GM10248 (cell line): ENCODE measurements at regions of chr4 and their contacts with region 1.

Region 1: GRCh38 chr4:54233277-54233696 is 4.2 kb downstream of the PDGFRA start:
- DNase-seq: peak; percentile 85
- CTCF ChIP-seq: peak; percentile 87

Region 2: GRCh38 chr4:52376132-52376704 is 1857.1 kb before region 1 on chr4:
- CTCF ChIA-PET with region 1: interaction called, 16 read pairs
- POLR2A ChIA-PET with region 1: no interaction called
- DNase-seq: peak; percentile 24
- CTCF ChIP-seq: peak; percentile 37

Region 3: GRCh38 chr4:53702334-53703266 is 530.7 kb before region 1 on chr4:
- CTCF ChIA-PET with region 1: interaction called, 10 read pairs
- POLR2A ChIA-PET with region 1: no interaction called
- DNase-seq: peak; percentile 47
- CTCF ChIP-seq: peak; percentile 15

Region 4: DNA sequence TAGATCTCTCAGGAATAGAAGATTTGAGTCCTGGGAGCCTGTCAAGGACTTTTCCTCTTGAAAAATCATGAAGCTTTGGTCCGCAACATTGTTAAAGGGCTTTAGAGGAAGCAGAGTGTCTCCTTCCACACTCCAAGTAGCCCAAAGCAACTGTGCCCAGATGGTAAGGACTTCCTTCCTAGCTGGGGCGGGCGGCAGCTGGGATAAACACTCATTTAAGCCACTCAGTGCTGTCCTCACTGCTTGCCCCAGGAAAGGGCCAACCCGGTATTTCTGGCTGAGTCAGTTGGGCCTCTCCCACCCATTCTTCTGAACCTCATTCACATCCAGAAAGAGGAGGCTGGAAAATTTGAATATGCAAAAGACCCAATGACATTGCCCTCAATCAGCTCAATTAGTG is 313.2 kb before region 1 on chr4:
- CTCF ChIA-PET with region 1: interaction called, 23 read pairs
- POLR2A ChIA-PET with region 1: no interaction called
- DNase-seq: no peak
- CTCF ChIP-seq: no peak

Region 5: DNA sequence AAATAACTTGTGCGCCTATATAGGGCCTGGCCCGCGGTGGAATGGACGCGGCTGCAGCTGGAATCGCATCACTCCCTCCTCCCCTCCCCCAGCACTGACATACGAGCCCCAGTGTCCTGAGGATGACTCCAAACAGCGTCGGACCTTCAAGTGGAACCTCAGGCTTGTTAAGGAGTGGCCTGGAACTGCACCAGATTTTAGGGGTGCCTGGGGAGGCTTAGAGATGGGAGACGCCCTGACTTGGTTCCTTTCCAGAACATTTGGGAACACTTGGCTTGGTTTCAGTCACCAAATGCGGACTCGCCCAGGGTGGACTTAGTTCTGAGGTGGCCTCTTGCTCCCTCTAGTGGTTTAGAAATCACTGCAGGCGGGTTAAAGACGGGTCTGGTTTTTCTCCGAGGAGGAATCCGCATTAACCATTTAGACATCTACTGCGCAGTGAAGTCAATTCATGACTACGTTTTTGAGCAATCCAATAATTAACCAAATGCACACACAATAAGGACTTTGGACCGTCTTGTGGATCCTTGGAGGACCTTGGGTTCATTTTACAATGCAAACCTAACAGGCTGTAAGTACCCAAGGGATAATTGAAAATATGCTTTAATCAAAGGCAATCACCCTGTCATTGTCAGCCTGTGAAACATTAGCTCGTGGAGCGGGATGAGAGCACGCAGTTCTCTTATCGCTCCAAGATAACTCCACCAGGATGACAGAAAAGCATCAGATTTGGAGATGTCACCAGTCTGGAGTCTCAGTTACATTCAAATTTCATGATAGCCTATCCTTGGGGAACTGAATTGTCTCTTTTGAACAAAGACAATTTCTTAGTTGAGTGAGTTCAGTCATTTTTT is 15.4 kb before region 1 on chr4:
- CTCF ChIA-PET with region 1: interaction called, 31 read pairs
- POLR2A ChIA-PET with region 1: no interaction called
- DNase-seq: peak; percentile 76
- CTCF ChIP-seq: peak; percentile 66

Region 6: GRCh38 chr4:54274795-54275665 is 41.7 kb after region 1 on chr4:
- CTCF ChIA-PET with region 1: interaction called, 10 read pairs
- POLR2A ChIA-PET with region 1: no interaction called
- DNase-seq: no peak
- CTCF ChIP-seq: no peak

Region 7: DNA sequence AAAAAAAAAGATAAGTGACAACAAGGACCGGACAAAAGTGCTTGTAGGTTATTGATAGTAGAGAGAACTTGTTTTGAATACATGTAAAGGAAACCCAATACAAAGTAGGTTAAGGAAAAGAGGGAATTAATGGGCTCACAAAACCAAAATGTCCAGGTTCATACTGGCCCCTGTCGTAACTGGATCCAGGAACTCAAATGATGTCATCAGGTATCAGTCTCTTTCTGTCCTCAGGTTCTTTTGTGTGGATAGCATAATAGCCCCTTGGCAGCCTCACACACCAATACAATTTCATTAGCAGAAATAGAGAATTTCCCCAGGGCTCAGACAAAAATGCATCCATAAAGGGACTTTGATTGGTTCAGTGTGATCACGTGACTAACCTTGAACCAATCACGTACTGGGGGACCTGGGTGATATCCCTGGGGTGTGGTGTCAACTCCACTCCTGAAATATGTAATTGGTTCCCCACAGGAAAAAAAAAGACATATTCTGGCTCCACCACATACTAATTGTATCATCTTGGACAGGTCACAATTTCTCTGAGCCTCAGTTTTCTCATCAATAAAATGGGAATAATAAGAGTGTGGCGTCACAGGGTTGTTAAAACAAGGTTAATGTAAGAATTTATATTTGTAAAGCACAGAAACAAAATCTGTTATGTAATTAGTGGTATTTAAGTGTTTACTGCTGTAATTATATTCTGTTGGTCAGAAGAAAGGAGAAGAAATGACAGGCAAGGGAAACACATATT is 170.6 kb after region 1 on chr4:
- CTCF ChIA-PET with region 1: no interaction called
- POLR2A ChIA-PET with region 1: no interaction called
- DNase-seq: no peak
- CTCF ChIP-seq: no peak